Activated CD4-positive, alpha-beta T cell treated with anti-CD3 and anti-CD28 coated beads for 36 hours (primary cell): ENCODE measurements at regions of chr19 and their contacts with region 1.

Region 1: GRCh38 chr19:39480337-39481228 is at the start of gene TIMM50:
- DNase-seq: peak; percentile 100
- ATAC-seq: peak; percentile 94
- H3K4me3 Mint-ChIP-seq: peak within 1 kb of the TSS; percentile 95
- H3K27ac Mint-ChIP-seq: peak within 1 kb of the TSS; percentile 92
- H3K4me1 Mint-ChIP-seq: peaks cover 24% of the 10 kb centered on the region
- H3K27me3 Mint-ChIP-seq: no peaks in the 10 kb centered on the region
- total RNA-seq, gene TIMM50: 99.4 to 126 TPM

Region 2: DNA sequence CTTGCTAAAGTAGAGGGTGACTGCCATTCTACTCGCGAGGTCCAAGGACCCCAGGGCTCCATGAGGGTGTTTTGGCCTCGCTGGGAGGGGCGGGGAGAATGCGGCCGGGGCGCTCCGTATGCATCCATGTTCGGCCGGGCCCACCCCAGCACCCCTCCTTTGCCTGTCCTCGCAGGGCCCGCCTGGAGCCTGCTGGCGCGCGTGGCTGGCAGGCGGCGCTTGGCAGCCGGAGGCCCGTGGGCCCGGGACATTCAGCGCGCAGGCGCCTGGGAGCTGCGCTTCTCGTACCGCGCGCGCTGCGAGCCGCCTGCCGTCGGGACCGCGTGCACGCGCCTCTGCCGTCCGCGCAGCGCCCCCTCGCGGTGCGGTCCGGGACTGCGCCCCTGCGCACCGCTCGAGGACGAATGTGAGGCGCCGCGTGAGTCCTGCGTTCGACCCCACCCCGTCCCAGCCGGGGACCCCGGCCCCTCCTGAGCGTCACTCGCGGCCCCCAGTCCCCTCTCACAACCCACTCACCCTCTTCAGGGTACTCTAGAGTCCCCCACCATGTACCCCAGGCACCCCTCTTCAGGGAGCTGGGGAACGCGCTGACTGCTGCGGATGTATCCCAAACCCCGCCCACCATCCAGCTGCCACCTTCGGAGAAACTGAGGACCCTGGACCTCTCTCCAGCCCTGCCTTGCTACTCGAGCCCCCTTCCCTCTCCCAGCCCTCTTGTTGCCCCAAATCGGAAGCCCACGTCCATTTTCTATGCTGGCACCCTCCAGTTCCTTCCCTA is 22.2 kb after region 1 on chr19:
- CTCF ChIA-PET with region 1: interaction called, 3 read pairs
- POLR2A ChIA-PET with region 1: no interaction called
- intact Hi-C with region 1: loop called in 1 of 2 experiments (anchors 1 kb)
- DNase-seq: peak; percentile 89
- ATAC-seq: peak; percentile 48
- H3K4me3 Mint-ChIP-seq: no peak overlapping the region
- H3K27ac Mint-ChIP-seq: no peak overlapping the region
- H3K4me1 Mint-ChIP-seq: peaks cover 29% of the 10 kb centered on the region
- H3K27me3 Mint-ChIP-seq: peaks cover 55% of the 10 kb centered on the region

Region 3: DNA sequence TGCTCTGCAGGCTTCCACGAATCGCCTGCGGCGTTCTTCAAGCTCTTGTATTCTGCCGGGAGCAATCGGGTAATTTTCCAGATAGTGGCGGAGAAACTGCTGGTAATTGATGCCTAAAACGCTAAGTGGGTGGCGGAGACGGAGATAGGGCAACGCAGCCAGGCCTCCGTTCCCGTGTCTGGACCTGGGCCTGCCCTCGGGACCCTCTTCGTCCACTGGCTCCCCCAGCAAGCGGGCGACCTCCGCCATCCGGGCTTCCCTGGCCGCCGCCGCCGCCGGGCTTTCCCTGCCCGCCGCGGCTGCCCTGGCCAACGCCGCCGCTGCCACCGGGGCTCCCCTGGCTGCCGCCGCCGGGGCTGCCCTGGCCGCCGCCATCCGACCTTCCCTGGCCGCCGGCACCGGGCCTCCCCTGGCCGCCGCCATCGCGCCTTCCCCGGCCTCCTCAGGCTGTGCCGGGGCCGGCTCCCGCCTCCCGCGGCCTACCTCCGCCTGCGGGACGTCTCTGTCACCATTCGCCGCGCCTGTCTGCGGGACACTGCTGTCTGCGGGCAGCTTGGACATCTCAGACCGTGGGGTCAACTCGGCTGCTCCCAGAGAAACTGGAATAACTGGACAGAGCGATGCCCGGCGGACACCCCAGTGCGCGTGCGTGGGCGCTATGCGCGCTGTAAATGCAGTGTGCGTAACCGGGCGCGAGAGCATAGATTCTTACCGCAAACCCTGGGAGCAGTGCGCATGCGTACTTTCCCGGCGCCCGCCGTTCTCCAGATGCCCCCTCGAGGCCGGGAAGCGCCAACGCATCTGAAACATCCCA is 59.1 kb after region 1 on chr19 and contains the start of gene EID2:
- CTCF ChIA-PET with region 1: interaction called, 27 read pairs
- POLR2A ChIA-PET with region 1: no interaction called
- intact Hi-C with region 1: loop called in 1 of 2 experiments (anchors 1 kb)
- DNase-seq: peak; percentile 98
- ATAC-seq: peak; percentile 80
- H3K4me3 Mint-ChIP-seq: peak within 1 kb of the TSS; percentile 84
- H3K27ac Mint-ChIP-seq: peak within 1 kb of the TSS; percentile 94
- H3K4me1 Mint-ChIP-seq: peaks cover 53% of the 10 kb centered on the region
- H3K27me3 Mint-ChIP-seq: no peaks in the 10 kb centered on the region
- total RNA-seq, gene EID2: 9.0 to 10.7 TPM